Panc1 (cell line): ENCODE measurements at regions of chr2 and their contacts with region 1.

Region 1: GRCh38 chr2:38671303-38671702 is 5.4 kb downstream of the GALM start:
- DNase-seq: no peak
- ATAC-seq: no peak
- H3K4me3 ChIP-seq: no peak overlapping the region
- H3K27ac ChIP-seq: peak overlapping the region; percentile 35; the same call in 1 of the 2 replicates
- H3K4me1 ChIP-seq: peaks cover 24% of the 10 kb centered on the region; the same call in 1 of the 2 replicates
- H3K27me3 ChIP-seq: no peaks in the 10 kb centered on the region
- CTCF ChIP-seq: no peak

Region 2: DNA sequence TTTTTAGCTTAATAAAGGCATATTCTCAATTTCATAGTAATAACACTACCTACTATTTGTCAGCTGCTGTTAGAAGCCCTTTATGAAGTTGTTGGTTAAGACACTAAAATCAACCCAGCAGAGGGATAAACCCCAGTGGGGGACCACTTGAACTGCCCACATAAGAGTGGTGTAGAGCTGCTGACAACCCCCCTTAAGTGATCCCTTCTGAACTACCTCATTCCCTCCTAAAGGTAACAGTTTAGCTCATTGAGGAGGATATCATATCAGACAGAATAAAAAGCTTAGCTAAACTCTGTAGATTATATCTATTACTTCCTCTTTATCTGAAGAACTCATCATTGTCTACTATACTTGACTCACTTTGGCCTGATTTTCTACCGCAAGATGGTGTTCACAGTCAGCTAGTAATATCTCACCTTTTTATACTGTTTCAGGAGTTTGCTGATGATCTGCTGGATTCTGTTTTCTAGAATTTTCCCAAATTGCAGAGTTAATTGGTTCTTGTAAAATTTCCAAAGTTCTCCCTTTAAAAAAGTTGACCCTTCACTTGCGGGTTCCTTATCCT is 10.8 kb after region 1 on chr2:
- CTCF ChIA-PET with region 1: no interaction called
- POLR2A ChIA-PET with region 1: interaction called, 11 read pairs
- in situ Hi-C with region 1: no loop called
- intact Hi-C with region 1: no loop called
- DNase-seq: no peak
- ATAC-seq: no peak
- H3K4me3 ChIP-seq: no peak overlapping the region
- H3K27ac ChIP-seq: no peak overlapping the region
- H3K4me1 ChIP-seq: 0 out of 2 replicates have a peak, but pooled peaks cover 6% of the 10 kb centered on the region
- H3K27me3 ChIP-seq: no peaks in the 10 kb centered on the region
- CTCF ChIP-seq: no peak